ENCODE measurements at regions of chr20 and their contacts with region 1.

Region 1: DNA sequence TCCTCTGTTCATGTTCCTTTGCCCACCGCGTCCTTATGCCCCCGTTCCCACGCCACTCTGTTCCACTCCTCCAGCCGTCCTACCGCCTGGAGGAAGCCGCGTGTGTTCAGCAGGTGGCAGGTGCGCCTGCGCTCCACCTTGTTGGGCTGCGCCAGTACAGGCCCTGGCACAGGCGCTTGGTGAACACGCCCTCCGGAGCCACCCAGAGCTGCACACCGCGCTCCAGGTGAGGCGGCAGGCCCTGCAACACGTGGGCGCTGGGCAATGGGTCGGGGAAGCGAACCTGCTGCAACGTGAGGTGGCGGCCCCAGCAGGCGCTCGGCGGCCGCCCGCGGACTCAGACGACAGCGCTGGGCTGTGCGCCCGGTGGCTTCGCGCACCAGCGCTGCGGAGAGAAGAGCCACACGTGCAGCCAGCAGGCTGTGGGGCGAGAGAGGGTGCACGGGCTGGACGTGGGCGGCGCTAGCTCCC is 4.1 kb upstream of the FOXS1 start:
- DNase-seq: no peak
- ATAC-seq: no peak; the same call in 1 of the 2 replicates
- H3K4me3 Mint-ChIP-seq: no peak overlapping the region
- H3K27ac Mint-ChIP-seq: no peak overlapping the region
- H3K4me1 Mint-ChIP-seq: 0 out of 2 replicates have a peak, but pooled peaks cover 4% of the 10 kb centered on the region
- H3K27me3 Mint-ChIP-seq: peaks cover 40% of the 10 kb centered on the region
- CTCF ChIP-seq: no peak

Region 2: DNA sequence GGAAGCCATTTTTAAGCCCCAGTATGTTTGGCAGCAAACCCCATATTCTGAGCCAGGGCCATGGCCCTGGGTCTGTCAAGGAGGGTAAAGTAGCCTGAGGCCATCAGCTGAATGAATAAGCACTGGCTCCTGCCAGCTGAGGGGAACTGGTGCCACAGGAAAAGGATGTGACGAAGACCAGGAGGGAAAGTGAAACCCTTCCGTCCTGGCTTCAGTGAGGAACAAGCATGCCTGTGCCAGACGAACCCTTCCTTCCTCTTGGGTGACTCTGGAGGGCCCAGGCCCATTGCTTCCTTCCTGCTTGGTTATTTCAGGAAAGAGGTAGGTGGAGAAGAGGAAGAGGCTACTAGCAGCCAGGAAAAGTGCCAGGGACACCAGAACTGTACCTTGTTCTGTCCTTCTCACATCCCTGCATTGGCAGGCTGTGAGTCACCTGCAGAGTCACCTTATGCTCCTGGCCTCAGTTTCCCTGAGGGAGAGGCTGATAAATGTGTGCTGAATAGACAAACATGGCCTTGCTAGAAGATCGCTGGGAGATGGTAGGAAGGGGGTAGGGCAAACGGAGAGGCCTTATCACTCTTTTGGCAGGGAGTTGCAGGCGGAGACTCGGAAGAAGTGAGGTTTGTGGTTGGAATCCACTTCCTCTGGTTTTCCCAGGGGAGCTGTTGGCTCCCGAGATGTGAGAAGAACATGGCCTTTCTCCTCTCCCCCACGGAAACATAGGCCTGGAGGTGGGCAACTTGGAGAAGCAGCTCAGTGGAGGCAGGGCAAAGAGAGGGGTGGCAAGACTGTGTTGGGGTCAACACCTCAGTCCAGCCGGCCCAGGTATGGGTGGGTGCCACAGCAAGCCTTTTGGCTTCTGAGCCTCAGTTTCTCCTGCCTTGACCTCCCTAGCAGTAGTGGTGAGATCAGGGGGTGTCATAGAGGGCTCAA is 174.3 kb before region 1 on chr20:
- CTCF ChIA-PET with region 1: no interaction called
- POLR2A ChIA-PET with region 1: no interaction called
- DNase-seq: no peak
- ATAC-seq: no peak
- H3K4me3 Mint-ChIP-seq: no peak overlapping the region
- H3K27ac Mint-ChIP-seq: peak overlapping the region; percentile 80
- H3K4me1 Mint-ChIP-seq: peaks cover 37% of the 10 kb centered on the region
- H3K27me3 Mint-ChIP-seq: no peaks in the 10 kb centered on the region
- CTCF ChIP-seq: no peak

Region 3: DNA sequence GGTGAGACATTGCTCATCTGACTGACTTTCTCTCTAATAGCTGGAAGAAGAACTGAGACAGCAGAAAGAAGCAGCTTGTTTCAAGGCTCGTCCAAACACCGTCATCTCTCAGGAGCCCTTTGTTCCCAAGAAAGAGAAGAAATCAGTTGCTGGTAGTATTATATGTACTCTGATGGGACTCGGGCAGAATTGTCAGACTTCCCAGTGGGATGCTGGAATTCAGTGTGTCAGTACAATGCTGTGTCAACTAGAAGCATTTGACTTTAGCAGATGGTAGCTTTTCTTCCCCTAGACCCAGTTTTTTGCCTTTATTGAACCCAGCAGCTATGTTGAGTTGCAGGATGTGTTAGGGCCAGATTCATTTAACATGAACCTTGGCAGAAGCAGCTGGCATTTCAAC is 52.1 kb before region 1 on chr20:
- CTCF ChIA-PET with region 1: no interaction called
- POLR2A ChIA-PET with region 1: no interaction called
- DNase-seq: no peak
- ATAC-seq: no peak
- H3K4me3 Mint-ChIP-seq: no peak overlapping the region
- H3K27ac Mint-ChIP-seq: no peak overlapping the region
- H3K4me1 Mint-ChIP-seq: no peaks in the 10 kb centered on the region
- H3K27me3 Mint-ChIP-seq: no peaks in the 10 kb centered on the region
- CTCF ChIP-seq: no peak

Region 4: GRCh38 chr20:31835977-31836852 is 13.3 kb before region 1 on chr20:
- CTCF ChIA-PET with region 1: interaction called, 70 read pairs
- POLR2A ChIA-PET with region 1: no interaction called
- DNase-seq: no peak
- ATAC-seq: no peak
- H3K4me3 Mint-ChIP-seq: no peak overlapping the region
- H3K27ac Mint-ChIP-seq: no peak overlapping the region
- H3K4me1 Mint-ChIP-seq: 0 out of 2 replicates have a peak, but pooled peaks cover 13% of the 10 kb centered on the region
- H3K27me3 Mint-ChIP-seq: no peaks in the 10 kb centered on the region
- CTCF ChIP-seq: no peak

Region 5: DNA sequence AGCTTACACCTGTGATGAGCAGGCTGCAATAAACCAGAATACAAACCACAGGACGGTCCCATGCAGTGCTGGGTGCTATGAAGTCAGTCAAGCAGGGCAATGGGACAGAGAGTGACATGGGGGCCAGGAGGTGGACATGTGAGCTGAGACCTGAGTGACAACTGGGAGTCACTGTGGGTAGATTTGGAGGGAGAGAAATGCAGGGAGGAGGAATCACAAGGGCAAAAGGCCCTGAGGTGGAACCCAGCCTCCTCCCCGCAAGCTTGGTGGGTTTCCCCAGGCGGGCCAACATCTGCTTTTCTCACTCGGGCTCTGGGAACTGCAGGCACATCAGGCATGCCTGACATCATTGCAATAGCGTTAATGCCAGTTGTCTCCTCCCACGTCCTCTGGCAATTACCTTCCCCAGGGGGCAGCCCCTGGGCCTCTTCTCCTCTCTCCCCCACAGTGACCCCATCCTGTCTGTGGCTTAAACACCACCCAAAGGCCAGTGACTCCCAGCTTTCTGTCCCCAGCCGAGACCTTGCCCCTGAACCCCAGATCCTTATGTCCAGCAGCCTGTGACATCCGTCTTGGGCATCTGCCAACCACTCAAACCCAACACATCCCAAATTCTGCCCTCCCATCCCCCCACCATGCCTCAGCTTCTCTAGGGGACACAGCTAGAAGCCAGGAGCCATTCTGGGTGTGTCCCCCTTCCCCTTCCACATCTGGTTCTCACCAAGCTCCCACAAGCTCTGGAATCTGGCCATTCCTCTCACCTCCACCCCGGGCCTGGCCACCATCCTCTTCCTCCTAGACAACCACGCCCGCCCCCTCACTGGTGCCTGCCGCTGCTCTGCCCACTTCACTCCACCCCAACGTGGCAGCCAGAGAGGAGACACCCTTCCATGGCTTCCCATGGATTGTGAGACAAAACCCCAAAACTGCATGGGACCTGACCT is 74.2 kb after region 1 on chr20:
- CTCF ChIA-PET with region 1: interaction called, 19 read pairs
- POLR2A ChIA-PET with region 1: no interaction called
- DNase-seq: no peak
- ATAC-seq: no peak
- H3K4me3 Mint-ChIP-seq: no peak overlapping the region
- H3K27ac Mint-ChIP-seq: no peak overlapping the region
- H3K4me1 Mint-ChIP-seq: peaks cover 19% of the 10 kb centered on the region
- H3K27me3 Mint-ChIP-seq: peaks cover under 1% of the 10 kb centered on the region; the same call in 1 of the 2 replicates
- CTCF ChIP-seq: no peak

Region 6: GRCh38 chr20:31974951-31975487 is 125.5 kb after region 1 on chr20:
- CTCF ChIA-PET with region 1: interaction called, 23 read pairs
- POLR2A ChIA-PET with region 1: no interaction called
- DNase-seq: peak; percentile 43
- ATAC-seq: peak; percentile 92
- H3K4me3 Mint-ChIP-seq: peak overlapping the region; percentile 30
- H3K27ac Mint-ChIP-seq: peak overlapping the region; percentile 82
- H3K4me1 Mint-ChIP-seq: peaks cover 20% of the 10 kb centered on the region
- H3K27me3 Mint-ChIP-seq: peaks cover 4% of the 10 kb centered on the region; the same call in 1 of the 2 replicates
- CTCF ChIP-seq: no peak

Region 7: GRCh38 chr20:32031007-32031958 is 181.8 kb after region 1 on chr20:
- CTCF ChIA-PET with region 1: interaction called, 70 read pairs
- POLR2A ChIA-PET with region 1: no interaction called
- DNase-seq: peak; percentile 95
- ATAC-seq: peak; percentile 99
- H3K4me3 Mint-ChIP-seq: peak overlapping the region; percentile 56
- H3K27ac Mint-ChIP-seq: no peak overlapping the region
- H3K4me1 Mint-ChIP-seq: peaks cover 13% of the 10 kb centered on the region
- H3K27me3 Mint-ChIP-seq: peaks cover 7% of the 10 kb centered on the region
- CTCF ChIP-seq: peak; percentile 100

Measured in WTC11 (cell line).